ENCODE measurements at regions of chr13 and their contacts with region 1.

Region 1: DNA sequence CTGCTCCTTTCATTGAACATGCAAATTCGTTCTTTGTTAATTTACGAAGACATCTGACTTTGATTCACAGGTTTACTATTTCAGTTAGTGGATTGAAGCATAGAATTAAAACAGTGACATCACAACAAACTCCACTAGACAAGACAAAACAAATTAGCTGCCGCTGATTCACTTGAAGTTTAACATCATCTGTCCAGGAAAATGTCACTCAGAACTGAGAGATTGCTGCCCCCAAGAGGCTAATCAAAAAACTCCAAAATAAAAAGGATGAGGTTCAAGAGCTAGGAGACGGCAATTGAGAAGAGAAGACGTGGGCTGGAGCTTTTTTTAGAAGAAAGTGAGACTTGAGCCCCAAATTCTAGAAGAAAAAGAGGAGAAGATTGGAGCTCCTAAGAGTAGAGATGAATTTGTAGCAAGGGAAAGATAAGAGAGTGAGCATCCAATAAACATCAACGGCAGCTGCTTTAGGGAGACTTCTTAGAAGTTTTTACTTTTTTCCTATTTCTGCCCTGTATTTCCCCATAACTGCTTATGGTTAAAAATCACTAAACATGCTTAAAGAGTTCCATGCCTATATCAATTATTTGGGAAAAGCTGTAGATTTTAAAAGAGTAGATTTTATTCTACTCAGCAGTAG is 40.8 kb upstream of the TPP2 start:
- DNase-seq: peak in 2 of 9 experiments; percentile 37 to 45
- ATAC-seq: peak; percentile 42
- H3K4me3 ChIP-seq: no peak overlapping the region
- H3K4me3 Mint-ChIP-seq: no peak overlapping the region
- H3K27ac ChIP-seq: no peak overlapping the region
- H3K27ac Mint-ChIP-seq: no peak overlapping the region
- H3K4me1 ChIP-seq: no peaks in the 10 kb centered on the region
- H3K4me1 Mint-ChIP-seq: no peaks in the 10 kb centered on the region
- H3K27me3 ChIP-seq: no peaks in the 10 kb centered on the region
- H3K27me3 Mint-ChIP-seq: peaks cover 10% of the 10 kb centered on the region
- CTCF ChIP-seq: peak; percentile 52

Region 2: DNA sequence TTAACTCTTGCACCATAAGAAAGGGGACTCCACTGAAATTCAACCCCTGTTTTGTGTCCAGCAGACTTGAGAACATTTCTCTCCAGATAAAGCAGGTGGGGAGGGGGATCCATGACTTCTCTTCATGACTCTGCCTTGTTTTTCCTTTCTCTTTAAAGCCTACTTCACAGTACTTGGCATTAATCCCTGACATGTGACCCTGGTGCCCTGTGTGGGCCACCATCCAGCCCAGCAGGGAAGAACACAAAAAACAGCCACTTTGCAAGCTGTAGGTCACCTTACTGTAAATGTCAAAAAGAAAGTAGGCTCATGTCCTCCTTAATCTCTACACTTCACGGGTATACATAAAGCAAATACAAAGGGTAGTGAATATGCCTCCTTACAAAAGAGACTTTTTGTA is 10.5 kb after region 1 on chr13:
- CTCF ChIA-PET with region 1: interaction called, 17 read pairs
- POLR2A ChIA-PET with region 1: interaction called, 4 read pairs
- intact Hi-C with region 1: no loop called
- DNase-seq: no peak
- ATAC-seq: no peak
- H3K4me3 ChIP-seq: no peak overlapping the region
- H3K4me3 Mint-ChIP-seq: no peak overlapping the region
- H3K27ac ChIP-seq: no peak overlapping the region
- H3K27ac Mint-ChIP-seq: no peak overlapping the region
- H3K4me1 ChIP-seq: no peaks in the 10 kb centered on the region
- H3K4me1 Mint-ChIP-seq: no peaks in the 10 kb centered on the region
- H3K27me3 ChIP-seq: peaks cover 0 to 2% of the 10 kb centered on the region in 2 experiments
- H3K27me3 Mint-ChIP-seq: peaks cover 26% of the 10 kb centered on the region
- CTCF ChIP-seq: no peak

Region 3: GRCh38 chr13:102773441-102774215 is 217.6 kb after region 1 on chr13 and contains the start of gene TEX30:
- CTCF ChIA-PET with region 1: no interaction called
- POLR2A ChIA-PET with region 1: no interaction called
- intact Hi-C with region 1: no loop called
- DNase-seq: peak; percentile 75 to 93 (median 86)
- ATAC-seq: peak; percentile 96
- H3K4me3 ChIP-seq: peak within 1 kb of the TSS; percentile 66 to 70
- H3K4me3 Mint-ChIP-seq: peak within 1 kb of the TSS; percentile 88
- H3K27ac ChIP-seq: peak within 1 kb of the TSS; percentile 70 to 82
- H3K27ac Mint-ChIP-seq: peak within 1 kb of the TSS; percentile 91
- H3K4me1 ChIP-seq: peaks cover 15% of the 10 kb centered on the region
- H3K4me1 Mint-ChIP-seq: peaks cover 34% of the 10 kb centered on the region
- H3K27me3 ChIP-seq: no peaks in the 10 kb centered on the region
- H3K27me3 Mint-ChIP-seq: no peaks in the 10 kb centered on the region
- CTCF ChIP-seq: no peak
- total RNA-seq, gene TEX30: 10.4 to 10.9 TPM